ENCODE measurements at regions of chr1 and their contacts with region 1.

Region 1: GRCh38 chr1:146012737-146013403 is 8.7 kb downstream of the HJV start:
- DNase-seq: no peak
- ATAC-seq: peak; percentile 38 to 58
- H3K4me3 ChIP-seq: no peak overlapping the region
- H3K27ac ChIP-seq: no peak overlapping the region
- H3K4me1 ChIP-seq: peaks cover 46% of the 10 kb centered on the region
- H3K27me3 ChIP-seq: no peaks in the 10 kb centered on the region
- CTCF ChIP-seq: peak; percentile 76

Region 2: GRCh38 chr1:145806844-145807243 is 206.0 kb before region 1 on chr1:
- intact Hi-C with region 1: no loop called
- DNase-seq: no peak
- ATAC-seq: no peak
- H3K4me3 ChIP-seq: no peak overlapping the region
- H3K27ac ChIP-seq: no peak overlapping the region
- H3K4me1 ChIP-seq: peaks cover 18% of the 10 kb centered on the region
- H3K27me3 ChIP-seq: no peaks in the 10 kb centered on the region
- CTCF ChIP-seq: no peak

Region 3: GRCh38 chr1:145978854-145979759 is 33.8 kb before region 1 on chr1:
- intact Hi-C with region 1: loop called (anchors 5 kb)
- DNase-seq: peak; percentile 93
- ATAC-seq: peak; percentile 97
- H3K4me3 ChIP-seq: peak overlapping the region; percentile 44
- H3K27ac ChIP-seq: peak overlapping the region; percentile 96
- H3K4me1 ChIP-seq: peaks cover 68% of the 10 kb centered on the region
- H3K27me3 ChIP-seq: no peaks in the 10 kb centered on the region
- CTCF ChIP-seq: peak; percentile 17

Measured in lower lobe of right lung (tissue), 2 donors.